A673 (cell line): ENCODE measurements at regions of chrX and their contacts with region 1.

Region 1: GRCh38 chrX:51802917-51803688 is 59.9 kb downstream of the GSPT2 start:
- DNase-seq: peak; percentile 65
- H3K4me3 ChIP-seq: peak overlapping the region; percentile 62
- H3K27ac ChIP-seq: peak overlapping the region; percentile 51
- H3K4me1 ChIP-seq: no peaks in the 10 kb centered on the region
- H3K27me3 ChIP-seq: no peaks in the 10 kb centered on the region
- CTCF ChIP-seq: peak; percentile 29; the same call in 1 of the 2 replicates

Region 2: DNA sequence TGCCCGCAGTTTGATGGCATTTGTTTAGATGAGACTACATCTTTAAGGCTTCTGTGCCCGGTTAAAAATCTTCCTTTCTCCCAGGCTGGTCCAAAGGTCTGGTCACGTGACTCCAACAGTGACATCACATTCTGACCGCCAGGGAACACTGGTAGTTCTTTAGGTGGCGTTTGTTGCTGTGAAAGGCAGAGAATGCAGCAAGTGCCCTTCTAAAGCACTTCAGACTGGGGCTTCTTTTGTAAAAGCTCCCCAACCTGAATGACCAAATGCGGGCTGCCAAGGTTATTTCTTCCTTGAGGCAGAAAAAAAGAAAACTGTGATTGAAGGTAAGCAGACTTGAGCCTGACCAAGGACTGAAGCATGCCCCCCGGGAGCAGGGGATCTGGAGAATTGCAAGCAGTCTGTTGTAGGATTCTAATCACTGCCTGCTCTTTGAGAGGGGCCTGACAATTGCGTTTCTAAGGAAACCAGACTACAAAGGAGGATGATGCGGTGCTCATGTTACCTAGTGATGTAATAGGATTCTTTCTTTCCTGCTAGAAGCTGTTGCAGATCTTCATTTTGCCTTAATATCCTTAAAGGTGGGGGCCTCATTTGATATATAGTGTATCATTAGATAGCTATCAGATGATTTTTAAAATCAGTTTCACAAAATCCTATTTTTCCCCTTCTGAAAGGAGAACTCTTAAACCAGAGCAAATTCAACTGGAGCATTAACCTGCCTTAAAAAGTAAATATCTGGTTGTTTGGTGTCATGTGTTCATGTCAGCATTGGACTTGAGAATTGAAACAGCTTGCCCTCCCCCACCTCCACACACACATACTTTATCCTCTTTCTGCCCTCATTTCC is 1735.4 kb before region 1 on chrX:
- CTCF ChIA-PET with region 1: no interaction called
- POLR2A ChIA-PET with region 1: no interaction called
- intact Hi-C with region 1: no loop called
- DNase-seq: peak; percentile 3
- H3K4me3 ChIP-seq: no peak overlapping the region
- H3K27ac ChIP-seq: no peak overlapping the region
- H3K4me1 ChIP-seq: no peaks in the 10 kb centered on the region
- H3K27me3 ChIP-seq: no peaks in the 10 kb centered on the region
- CTCF ChIP-seq: no peak

Region 3: GRCh38 chrX:51641421-51642021 is 161.6 kb before region 1 on chrX:
- CTCF ChIA-PET with region 1: interaction called, 10 read pairs
- POLR2A ChIA-PET with region 1: no interaction called
- intact Hi-C with region 1: no loop called
- DNase-seq: peak; percentile 81
- H3K4me3 ChIP-seq: no peak overlapping the region
- H3K27ac ChIP-seq: no peak overlapping the region
- H3K4me1 ChIP-seq: no peaks in the 10 kb centered on the region
- H3K27me3 ChIP-seq: no peaks in the 10 kb centered on the region
- CTCF ChIP-seq: peak; percentile 77

Region 4: GRCh38 chrX:51766546-51766945 is 36.6 kb before region 1 on chrX:
- CTCF ChIA-PET with region 1: no interaction called
- POLR2A ChIA-PET with region 1: no interaction called
- intact Hi-C with region 1: no loop called
- DNase-seq: no peak
- H3K4me3 ChIP-seq: no peak overlapping the region
- H3K27ac ChIP-seq: no peak overlapping the region
- H3K4me1 ChIP-seq: no peaks in the 10 kb centered on the region
- H3K27me3 ChIP-seq: peaks cover 25% of the 10 kb centered on the region
- CTCF ChIP-seq: no peak

Region 5: GRCh38 chrX:51779306-51779705 is 23.8 kb before region 1 on chrX:
- CTCF ChIA-PET with region 1: no interaction called
- POLR2A ChIA-PET with region 1: interaction called, 11 read pairs
- intact Hi-C with region 1: no loop called
- DNase-seq: no peak
- H3K4me3 ChIP-seq: no peak overlapping the region
- H3K27ac ChIP-seq: no peak overlapping the region
- H3K4me1 ChIP-seq: no peaks in the 10 kb centered on the region
- H3K27me3 ChIP-seq: peaks cover 17% of the 10 kb centered on the region
- CTCF ChIP-seq: no peak